Aorta (tissue), 5 donors: ENCODE measurements at regions of chr3 and their contacts with region 1.

Region 1: GRCh38 chr3:127953091-127954035 is 38.3 kb downstream of the KBTBD12 start:
- DNase-seq: no peak
- ATAC-seq: no peak
- H3K4me3 ChIP-seq: no peak overlapping the region
- H3K27ac ChIP-seq: peak overlapping the region in 1 of 2 donors; percentile 28
- H3K4me1 ChIP-seq: no peaks in the 10 kb centered on the region
- H3K27me3 ChIP-seq: no peaks in the 10 kb centered on the region

Region 2: GRCh38 chr3:127915115-127915936 is 38.0 kb before region 1 on chr3 and contains the start of gene KBTBD12:
- intact Hi-C with region 1: loop called (anchors 5 kb)
- DNase-seq: peak; percentile 70 to 88
- ATAC-seq: peak; percentile 84
- H3K4me3 ChIP-seq: peak within 1 kb of the TSS; percentile 39 to 40
- H3K27ac ChIP-seq: peak within 1 kb of the TSS; percentile 65 to 72
- H3K4me1 ChIP-seq: no peaks in the 10 kb centered on the region
- H3K27me3 ChIP-seq: no peaks in the 10 kb centered on the region
- total RNA-seq, gene KBTBD12: 4.5 to 7.6 TPM